ENCODE measurements at regions of chr17 and their contacts with region 1.

Region 1: GRCh38 chr17:35764123-35764991 is 3.7 kb downstream of the C17orf50 start:
- DNase-seq: peak; percentile 90
- ATAC-seq: peak; percentile 96
- H3K4me3 Mint-ChIP-seq: peak overlapping the region; percentile 83
- H3K27ac Mint-ChIP-seq: peak overlapping the region; percentile 86
- H3K4me1 Mint-ChIP-seq: peaks cover 17% of the 10 kb centered on the region
- H3K27me3 Mint-ChIP-seq: no peaks in the 10 kb centered on the region

Region 2: GRCh38 chr17:35612924-35613521 is 151.3 kb before region 1 on chr17:
- CTCF ChIA-PET with region 1: interaction called, 29 read pairs
- POLR2A ChIA-PET with region 1: no interaction called
- DNase-seq: peak; percentile 58
- ATAC-seq: no peak
- H3K4me3 Mint-ChIP-seq: no peak overlapping the region
- H3K27ac Mint-ChIP-seq: no peak overlapping the region
- H3K4me1 Mint-ChIP-seq: peaks cover 1% of the 10 kb centered on the region
- H3K27me3 Mint-ChIP-seq: no peaks in the 10 kb centered on the region

Region 3: DNA sequence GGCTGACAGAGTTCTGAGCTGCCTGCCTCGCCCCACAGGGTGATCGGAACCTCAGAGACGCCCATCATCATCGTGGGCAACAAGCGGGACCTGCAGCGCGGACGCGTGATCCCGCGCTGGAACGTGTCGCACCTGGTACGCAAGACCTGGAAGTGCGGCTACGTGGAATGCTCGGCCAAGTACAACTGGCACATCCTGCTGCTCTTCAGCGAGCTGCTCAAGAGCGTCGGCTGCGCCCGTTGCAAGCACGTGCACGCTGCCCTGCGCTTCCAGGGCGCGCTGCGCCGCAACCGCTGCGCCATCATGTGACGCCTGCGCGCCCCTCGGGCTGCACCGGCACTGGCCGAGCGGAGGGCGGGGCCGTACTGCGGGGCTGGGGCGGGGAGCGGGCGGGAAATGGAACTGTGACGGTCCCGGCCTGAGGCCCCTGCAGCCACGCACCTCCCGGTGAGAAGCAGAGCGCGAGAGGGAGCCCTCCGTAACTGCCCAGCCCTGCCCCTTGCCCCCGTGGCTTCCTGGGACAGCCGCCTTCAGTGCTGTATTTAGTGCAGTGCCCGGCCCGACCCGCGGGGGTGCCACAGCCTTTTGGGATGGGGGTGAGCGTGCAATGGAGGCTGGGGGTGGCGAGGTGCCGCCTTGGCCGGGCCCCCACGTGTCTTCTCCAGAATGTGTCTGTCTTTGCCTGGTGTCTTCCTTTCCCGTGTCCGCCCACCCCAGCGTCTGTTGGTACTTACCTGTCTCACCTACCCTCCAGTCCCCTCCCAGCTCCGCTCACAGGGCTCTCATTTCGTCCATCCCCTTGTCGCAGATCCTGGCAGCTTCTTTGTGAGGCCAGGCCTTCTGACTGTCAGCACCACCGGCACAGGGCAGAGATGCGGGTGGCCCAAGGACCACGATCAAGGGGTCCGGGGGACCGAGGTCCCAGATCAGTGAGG is 23.1 kb before region 1 on chr17:
- CTCF ChIA-PET with region 1: interaction called, 81 read pairs
- POLR2A ChIA-PET with region 1: interaction called, 3 read pairs
- DNase-seq: peak; percentile 34
- ATAC-seq: peak; percentile 60
- H3K4me3 Mint-ChIP-seq: peak overlapping the region; percentile 49
- H3K27ac Mint-ChIP-seq: no peak overlapping the region
- H3K4me1 Mint-ChIP-seq: peaks cover 7% of the 10 kb centered on the region
- H3K27me3 Mint-ChIP-seq: peaks cover 29% of the 10 kb centered on the region

Region 4: GRCh38 chr17:35778641-35779196 is 14.4 kb after region 1 on chr17:
- CTCF ChIA-PET with region 1: interaction called, 56 read pairs
- POLR2A ChIA-PET with region 1: no interaction called
- DNase-seq: no peak
- ATAC-seq: no peak
- H3K4me3 Mint-ChIP-seq: no peak overlapping the region
- H3K27ac Mint-ChIP-seq: no peak overlapping the region
- H3K4me1 Mint-ChIP-seq: no peaks in the 10 kb centered on the region
- H3K27me3 Mint-ChIP-seq: peaks cover 21% of the 10 kb centered on the region

Region 5: DNA sequence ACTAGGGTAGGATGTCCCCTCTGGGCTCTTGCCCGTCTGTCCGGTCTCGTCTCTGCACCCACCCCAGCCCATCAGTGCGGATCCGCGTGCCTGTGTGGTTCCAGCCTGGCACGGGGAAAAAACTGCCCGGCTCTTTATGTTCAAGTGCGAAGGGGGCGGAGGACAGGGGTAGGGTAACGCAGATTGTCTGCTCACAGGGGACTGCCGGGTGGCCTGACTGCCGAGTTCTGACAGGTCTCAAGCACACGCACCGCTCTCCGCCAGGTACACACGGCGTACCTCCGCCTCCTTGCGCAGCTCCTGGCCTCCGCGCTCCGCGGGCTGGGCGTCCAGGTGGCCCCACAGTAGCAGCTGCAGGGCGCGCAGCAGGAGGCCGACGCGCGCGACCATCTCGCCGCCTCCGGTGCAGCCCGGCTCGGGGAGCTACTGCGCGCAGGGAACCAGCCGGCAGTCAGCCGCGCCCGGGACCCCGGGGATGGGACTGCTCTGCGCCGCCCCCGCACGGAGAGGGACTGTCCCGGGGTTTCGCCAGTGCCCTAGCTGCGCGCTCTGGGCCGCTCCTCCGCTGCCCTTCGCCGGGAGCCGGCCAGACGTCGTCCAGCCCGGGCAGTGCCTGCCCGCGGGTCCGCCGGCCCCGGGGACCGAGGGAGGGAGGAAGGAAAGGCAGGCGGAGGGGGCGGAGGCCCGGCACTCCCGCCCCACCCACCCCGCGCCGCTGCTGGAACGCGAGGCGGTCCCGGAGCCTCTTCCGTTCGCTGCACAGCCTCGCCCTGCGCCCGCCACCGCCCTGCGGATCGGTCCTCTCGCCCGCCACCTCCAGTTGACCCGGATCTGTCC is 30.8 kb after region 1 on chr17 and contains the start of gene MMP28:
- CTCF ChIA-PET with region 1: interaction called, 64 read pairs
- POLR2A ChIA-PET with region 1: interaction called, 3 read pairs
- DNase-seq: peak; percentile 53
- ATAC-seq: peak; percentile 88
- H3K4me3 Mint-ChIP-seq: peak within 1 kb of the TSS; percentile 75
- H3K27ac Mint-ChIP-seq: no peak within 1 kb of the TSS
- H3K4me1 Mint-ChIP-seq: peaks cover 15% of the 10 kb centered on the region
- H3K27me3 Mint-ChIP-seq: peaks cover 53% of the 10 kb centered on the region
- total RNA-seq, gene MMP28: not detected

Region 6: GRCh38 chr17:35808962-35809854 is 44.9 kb after region 1 on chr17 and contains the start of gene TAF15:
- CTCF ChIA-PET with region 1: interaction called, 415 read pairs
- POLR2A ChIA-PET with region 1: interaction called, 34 read pairs
- DNase-seq: peak; percentile 98
- ATAC-seq: peak; percentile 94
- H3K4me3 Mint-ChIP-seq: peak within 1 kb of the TSS; percentile 85
- H3K27ac Mint-ChIP-seq: peak within 1 kb of the TSS; percentile 98
- H3K4me1 Mint-ChIP-seq: peaks cover 54% of the 10 kb centered on the region
- H3K27me3 Mint-ChIP-seq: no peaks in the 10 kb centered on the region
- total RNA-seq, gene TAF15: 336 to 341 TPM

Region 7: DNA sequence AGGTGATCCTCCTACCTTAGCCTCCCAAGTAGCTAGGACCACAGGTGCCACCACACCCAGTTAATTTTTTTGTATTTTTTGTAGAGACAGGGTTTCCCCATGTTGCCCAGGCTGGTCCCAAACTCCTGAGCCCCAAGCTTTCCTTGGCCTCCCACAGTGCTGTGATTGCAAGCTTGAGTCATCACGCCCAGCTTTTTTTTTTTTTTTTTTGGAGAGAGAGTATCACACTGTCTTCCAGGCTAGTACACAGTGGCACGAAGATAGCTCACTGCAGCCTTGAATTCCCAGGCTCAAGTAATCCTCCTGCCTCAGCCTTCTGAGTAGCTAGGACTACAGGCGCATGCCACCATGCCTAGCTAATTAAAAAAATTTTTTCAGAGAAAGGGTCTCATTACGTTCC is 77.1 kb after region 1 on chr17:
- CTCF ChIA-PET with region 1: interaction called, 10 read pairs
- POLR2A ChIA-PET with region 1: no interaction called
- DNase-seq: no peak
- ATAC-seq: no peak
- H3K4me3 Mint-ChIP-seq: no peak overlapping the region
- H3K27ac Mint-ChIP-seq: no peak overlapping the region
- H3K4me1 Mint-ChIP-seq: peaks cover 9% of the 10 kb centered on the region
- H3K27me3 Mint-ChIP-seq: no peaks in the 10 kb centered on the region

Region 8: GRCh38 chr17:35915153-35915969 is 151.0 kb after region 1 on chr17:
- CTCF ChIA-PET with region 1: no interaction called
- POLR2A ChIA-PET with region 1: no interaction called
- DNase-seq: no peak
- ATAC-seq: no peak
- H3K4me3 Mint-ChIP-seq: no peak overlapping the region
- H3K27ac Mint-ChIP-seq: no peak overlapping the region
- H3K4me1 Mint-ChIP-seq: peaks cover 46% of the 10 kb centered on the region
- H3K27me3 Mint-ChIP-seq: no peaks in the 10 kb centered on the region

Measured in activated CD8-positive, alpha-beta T cell treated with anti-CD3 and anti-CD28 coated beads, Interleukin-2, amount 10 ng/mL, durations not matched to agents 7 days and 5 days (primary cell).